ENCODE measurements at regions of chr11 and their contacts with region 1.

Region 1: DNA sequence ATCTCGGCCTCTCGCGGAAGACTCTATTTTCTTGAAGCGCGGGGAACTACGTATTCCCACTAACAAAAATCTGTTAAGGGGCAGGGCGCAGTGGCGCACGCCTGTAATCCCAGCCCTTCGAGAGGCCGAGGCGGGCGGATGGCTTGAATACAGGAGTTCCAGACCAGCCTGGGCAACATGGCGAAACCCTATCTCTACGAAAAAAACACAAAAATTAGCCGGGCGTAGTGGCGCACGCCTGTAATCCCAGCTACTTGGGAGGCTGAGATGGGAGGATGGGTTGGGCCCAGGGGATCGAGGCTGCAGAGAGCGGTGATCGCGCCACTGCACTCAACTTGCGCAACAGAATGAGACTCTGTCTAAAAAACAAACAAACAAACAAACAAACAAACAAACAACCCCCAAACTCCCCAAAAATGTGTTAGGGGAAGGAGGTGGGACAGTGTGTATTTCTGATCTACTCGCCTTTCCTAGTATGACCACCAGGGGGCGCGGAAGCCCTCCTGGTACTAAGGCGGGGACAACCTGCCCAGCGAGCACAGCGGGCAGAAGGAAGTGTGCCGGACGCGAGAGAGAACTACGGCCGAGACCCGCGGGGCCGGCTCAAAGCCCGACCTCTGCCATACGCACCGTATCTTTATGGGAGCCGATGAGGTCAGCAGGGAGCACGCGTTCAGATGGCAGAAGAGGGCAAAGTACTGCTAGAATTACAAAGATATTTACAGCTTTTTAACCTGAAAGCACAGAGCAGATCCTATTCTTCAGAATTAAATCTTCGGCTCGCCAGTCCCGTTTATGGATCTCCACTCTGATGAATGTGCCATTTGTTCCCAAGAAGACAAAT is 1.3 kb upstream of the STX3 start:
- DNase-seq: peak; percentile 89 to 91
- H3K4me3 ChIP-seq: peak overlapping the region; percentile 80 to 90
- H3K27ac ChIP-seq: peak overlapping the region; percentile 91 to 94
- H3K4me1 ChIP-seq: peaks cover 0 to 24% (median 10%) of the 10 kb centered on the region in 4 donors
- H3K27me3 ChIP-seq: no peaks in the 10 kb centered on the region
- CTCF ChIP-seq: peak; percentile 91 to 95

Region 2: DNA sequence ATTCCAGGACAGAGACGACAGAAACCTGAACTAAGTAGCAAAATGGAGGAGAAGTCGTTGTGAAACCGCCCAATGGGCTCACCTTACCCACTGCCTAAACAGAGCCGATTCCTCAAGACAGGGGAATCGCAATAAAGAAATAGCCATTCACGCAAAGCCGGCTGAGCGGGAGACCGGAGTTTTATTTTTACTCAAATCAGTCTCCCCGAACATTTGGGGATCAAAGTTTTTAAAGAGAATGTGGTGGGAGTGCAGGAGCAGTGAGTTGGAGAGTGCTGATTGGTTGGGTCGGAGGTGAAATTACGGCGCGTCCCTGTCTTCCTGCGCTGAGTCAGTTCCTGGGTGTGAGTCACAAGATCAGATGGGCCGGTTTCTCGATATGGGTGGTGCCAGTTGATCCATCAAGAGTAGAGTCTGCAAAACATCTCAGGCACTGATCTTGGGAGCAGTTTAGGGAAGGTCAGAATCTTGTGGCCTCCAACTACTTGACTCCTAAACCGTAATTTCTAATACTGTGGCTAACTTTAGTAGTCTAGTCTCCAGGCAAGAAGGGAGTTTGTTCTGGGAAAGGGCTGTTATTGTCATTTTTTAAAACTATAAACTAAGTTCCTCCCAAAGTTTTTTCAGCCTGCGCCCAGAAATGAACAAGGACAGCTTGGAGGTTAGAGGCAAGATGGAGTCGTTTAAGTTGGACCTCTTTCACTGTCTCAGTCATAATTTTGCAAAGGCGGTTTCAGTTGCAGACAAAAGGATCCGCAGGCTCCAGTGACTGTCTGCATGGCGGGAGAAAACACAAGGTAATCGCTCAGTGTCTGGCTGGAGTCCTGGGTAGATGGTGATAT is 208.5 kb before region 1 on chr11:
- intact Hi-C with region 1: loop called (anchors 10 kb)
- DNase-seq: no peak
- H3K4me3 ChIP-seq: no peak overlapping the region
- H3K27ac ChIP-seq: no peak overlapping the region
- H3K4me1 ChIP-seq: no peaks in the 10 kb centered on the region
- H3K27me3 ChIP-seq: no peaks in the 10 kb centered on the region
- CTCF ChIP-seq: no peak

Region 3: GRCh38 chr11:59802639-59803176 is 48.8 kb after region 1 on chr11:
- intact Hi-C with region 1: loop called (anchors 2 kb)
- DNase-seq: no peak
- H3K4me3 ChIP-seq: no peak overlapping the region
- H3K27ac ChIP-seq: peak overlapping the region in 1 of 2 donors; percentile 20
- H3K4me1 ChIP-seq: no peaks in the 10 kb centered on the region
- H3K27me3 ChIP-seq: no peaks in the 10 kb centered on the region
- CTCF ChIP-seq: peak; percentile 68 to 79

Measured in tibial artery (tissue), 4 donors.